ENCODE measurements at regions of chr11 and their contacts with region 1.

Region 1: GRCh38 chr11:68257475-68258362 is 14.1 kb downstream of the C11orf24 start:
- DNase-seq: peak; percentile 96
- ATAC-seq: peak; percentile 89
- H3K4me3 ChIP-seq: peak overlapping the region; percentile 41; the same call in 1 of the 2 replicates
- H3K27ac ChIP-seq: no peak overlapping the region
- H3K4me1 ChIP-seq: peaks cover 5% of the 10 kb centered on the region; the same call in 1 of the 2 replicates
- H3K27me3 ChIP-seq: no peaks in the 10 kb centered on the region
- CTCF ChIP-seq: peak; percentile 90

Region 2: GRCh38 chr11:68030318-68031138 is 227.2 kb before region 1 on chr11 and contains the start of gene NDUFS8:
- CTCF ChIA-PET with region 1: no interaction called
- POLR2A ChIA-PET with region 1: interaction called, 10 read pairs
- intact Hi-C with region 1: no loop called
- DNase-seq: peak; percentile 100
- ATAC-seq: peak; percentile 86
- H3K4me3 ChIP-seq: peak within 1 kb of the TSS; percentile 91
- H3K27ac ChIP-seq: peak within 1 kb of the TSS; percentile 95
- H3K4me1 ChIP-seq: peaks cover 44% of the 10 kb centered on the region
- H3K27me3 ChIP-seq: no peaks in the 10 kb centered on the region
- CTCF ChIP-seq: no peak
- total RNA-seq, gene NDUFS8: 560 and 576 TPM in 2 replicates

Region 3: DNA sequence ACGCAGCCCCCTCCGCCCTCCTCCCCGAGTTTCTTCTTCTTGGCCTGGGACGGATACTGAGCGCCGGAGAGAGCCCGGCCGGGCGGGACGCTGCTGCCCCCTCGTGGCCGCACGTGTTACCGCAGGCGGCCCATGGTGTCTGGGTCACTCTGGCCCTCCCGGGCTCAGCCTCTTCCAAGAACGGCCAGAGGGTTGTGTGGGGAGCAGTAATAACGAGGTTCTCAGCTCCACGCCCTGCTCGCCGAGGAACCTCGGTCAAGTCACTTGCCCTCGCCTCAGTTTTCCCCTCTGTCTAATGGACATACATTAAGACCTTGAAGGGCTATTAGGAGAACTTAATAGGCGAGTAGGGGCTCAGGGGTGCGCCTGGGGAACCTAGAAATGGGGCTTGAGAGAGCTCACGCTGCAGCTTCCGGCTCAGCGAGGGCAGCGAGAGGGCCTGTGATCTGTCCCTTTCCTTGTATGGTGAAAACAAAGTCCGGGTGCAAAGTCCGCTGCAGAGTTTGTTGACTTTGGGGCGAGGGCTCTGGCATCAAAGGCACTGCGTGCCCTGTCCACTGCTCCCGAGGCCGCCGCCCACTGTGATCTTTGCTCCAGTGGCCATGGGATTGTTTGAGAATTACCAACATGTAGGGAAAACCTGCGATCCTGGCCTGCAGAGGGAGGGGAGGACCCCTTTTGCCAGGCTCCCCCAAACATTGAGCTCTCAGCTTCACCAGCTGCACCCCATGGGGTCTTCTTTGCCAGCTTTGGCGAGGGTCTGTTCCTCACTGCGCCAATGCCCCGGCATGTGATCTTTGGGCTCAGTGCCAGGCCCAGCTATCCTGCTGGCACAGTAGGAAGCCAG is 40.3 kb after region 1 on chr11:
- CTCF ChIA-PET with region 1: interaction called, 5 read pairs
- POLR2A ChIA-PET with region 1: no interaction called
- intact Hi-C with region 1: loop called (anchors 1 kb)
- DNase-seq: peak; percentile 89
- ATAC-seq: peak; percentile 97
- H3K4me3 ChIP-seq: peak overlapping the region; percentile 52
- H3K27ac ChIP-seq: no peak overlapping the region
- H3K4me1 ChIP-seq: peaks cover 16% of the 10 kb centered on the region
- H3K27me3 ChIP-seq: no peaks in the 10 kb centered on the region
- CTCF ChIP-seq: peak; percentile 98

Region 4: DNA sequence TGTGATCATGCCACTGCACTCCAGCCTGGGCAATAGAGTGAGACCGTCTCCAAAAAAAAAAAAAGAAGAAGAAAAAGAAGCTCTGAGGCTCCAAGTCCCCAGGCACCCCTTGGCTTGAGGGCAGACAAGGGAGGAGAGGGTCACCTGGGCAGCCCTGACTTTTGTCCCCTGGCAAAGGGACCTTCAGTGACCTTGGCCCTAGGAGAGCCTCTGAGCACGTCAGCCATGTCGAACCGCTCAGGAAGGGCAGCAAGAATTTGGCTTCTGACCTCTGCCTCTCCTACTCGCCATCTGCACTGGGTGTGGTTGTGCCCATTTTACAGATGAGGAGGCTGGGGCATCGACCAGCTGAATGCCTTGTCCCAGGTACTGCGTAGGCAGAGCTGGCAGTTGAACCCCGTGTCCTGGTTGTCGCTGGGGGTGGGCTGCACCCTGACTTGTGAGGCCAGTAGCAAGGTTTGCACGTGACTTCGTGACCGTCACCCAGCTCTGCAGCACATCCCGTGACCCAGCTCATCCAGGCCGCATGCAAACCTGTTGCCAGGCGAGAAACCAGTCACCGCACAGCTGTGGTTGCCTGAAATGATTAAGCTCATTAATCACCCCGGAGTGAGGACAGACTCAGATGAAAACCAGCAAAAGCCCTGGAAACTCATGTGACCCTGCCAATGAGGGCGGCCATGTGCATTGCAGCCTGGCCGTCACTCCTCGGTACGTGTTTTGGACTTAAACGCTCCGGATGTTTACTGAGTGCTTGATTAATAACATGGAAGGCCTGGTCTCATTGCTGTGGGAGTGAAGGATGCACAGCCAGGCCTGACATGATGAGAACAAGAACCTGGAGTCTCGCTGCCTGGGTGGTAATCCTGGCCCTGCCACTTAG is 155.1 kb after region 1 on chr11:
- CTCF ChIA-PET with region 1: no interaction called
- POLR2A ChIA-PET with region 1: interaction called, 14 read pairs
- intact Hi-C with region 1: no loop called
- DNase-seq: no peak
- ATAC-seq: no peak
- H3K4me3 ChIP-seq: no peak overlapping the region
- H3K27ac ChIP-seq: no peak overlapping the region
- H3K4me1 ChIP-seq: no peaks in the 10 kb centered on the region
- H3K27me3 ChIP-seq: no peaks in the 10 kb centered on the region
- CTCF ChIP-seq: no peak

Region 5: GRCh38 chr11:68447015-68447801 is 189.5 kb after region 1 on chr11:
- CTCF ChIA-PET with region 1: no interaction called
- POLR2A ChIA-PET with region 1: no interaction called
- intact Hi-C with region 1: loop called (anchors 2 kb)
- DNase-seq: peak; percentile 78
- ATAC-seq: peak; percentile 96
- H3K4me3 ChIP-seq: no peak overlapping the region
- H3K27ac ChIP-seq: no peak overlapping the region
- H3K4me1 ChIP-seq: no peaks in the 10 kb centered on the region
- H3K27me3 ChIP-seq: no peaks in the 10 kb centered on the region
- CTCF ChIP-seq: peak; percentile 92

Region 6: GRCh38 chr11:68569357-68569756 is 311.6 kb after region 1 on chr11:
- CTCF ChIA-PET with region 1: no interaction called
- POLR2A ChIA-PET with region 1: no interaction called
- intact Hi-C with region 1: no loop called
- DNase-seq: no peak
- ATAC-seq: no peak
- H3K4me3 ChIP-seq: no peak overlapping the region
- H3K27ac ChIP-seq: no peak overlapping the region
- H3K4me1 ChIP-seq: no peaks in the 10 kb centered on the region
- H3K27me3 ChIP-seq: no peaks in the 10 kb centered on the region
- CTCF ChIP-seq: no peak

Measured in PC-3 (cell line).